ENCODE measurements at regions of chr4 and their contacts with region 1.

Region 1: GRCh38 chr4:118278473-118279274 is 74.1 kb downstream of the PRSS12 start:
- DNase-seq: peak; percentile 96 to 99 (median 98)
- ATAC-seq: peak; percentile 97
- H3K4me3 ChIP-seq: peak overlapping the region; percentile 69 to 79
- H3K4me3 Mint-ChIP-seq: peak overlapping the region; percentile 94
- H3K27ac ChIP-seq: peak overlapping the region; percentile 95 to 96
- H3K27ac Mint-ChIP-seq: peak overlapping the region; percentile 99
- H3K4me1 ChIP-seq: peaks cover 29% of the 10 kb centered on the region
- H3K4me1 Mint-ChIP-seq: peaks cover 59% of the 10 kb centered on the region
- H3K27me3 ChIP-seq: no peaks in the 10 kb centered on the region
- H3K27me3 Mint-ChIP-seq: no peaks in the 10 kb centered on the region
- CTCF ChIP-seq: no peak

Region 2: GRCh38 chr4:118237531-118237930 is 41.1 kb before region 1 on chr4:
- CTCF ChIA-PET with region 1: no interaction called
- POLR2A ChIA-PET with region 1: no interaction called
- intact Hi-C with region 1: no loop called
- DNase-seq: no peak
- ATAC-seq: no peak
- H3K4me3 ChIP-seq: no peak overlapping the region
- H3K4me3 Mint-ChIP-seq: no peak overlapping the region
- H3K27ac ChIP-seq: no peak overlapping the region
- H3K27ac Mint-ChIP-seq: no peak overlapping the region
- H3K4me1 ChIP-seq: no peaks in the 10 kb centered on the region
- H3K4me1 Mint-ChIP-seq: no peaks in the 10 kb centered on the region
- H3K27me3 ChIP-seq: no peaks in the 10 kb centered on the region
- H3K27me3 Mint-ChIP-seq: peaks cover 2% of the 10 kb centered on the region
- CTCF ChIP-seq: no peak

Region 3: DNA sequence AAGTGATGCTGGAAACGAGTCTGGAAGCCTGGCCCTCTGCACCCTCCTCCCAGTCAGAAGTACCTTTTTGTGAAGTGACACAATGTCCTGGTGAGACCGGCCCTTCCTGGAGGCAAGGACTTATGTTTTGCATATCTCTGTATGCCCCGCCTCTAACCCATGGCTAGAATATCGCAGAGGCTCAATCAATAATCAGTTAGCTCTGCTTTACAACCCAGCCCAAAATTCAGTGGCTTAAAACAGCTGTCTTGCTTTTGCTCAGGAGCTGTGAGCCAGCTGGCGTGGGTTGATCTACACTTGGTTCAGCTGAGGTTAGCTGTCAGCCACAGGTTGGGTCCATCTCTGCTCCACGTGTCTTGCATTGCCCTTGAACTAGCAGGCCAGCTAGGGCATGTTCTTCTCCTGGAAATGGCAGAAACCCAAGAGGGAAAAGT is 307.7 kb after region 1 on chr4:
- CTCF ChIA-PET with region 1: no interaction called
- POLR2A ChIA-PET with region 1: no interaction called
- intact Hi-C with region 1: loop called (anchors 1 to 5 kb)
- DNase-seq: no peak
- ATAC-seq: no peak
- H3K4me3 ChIP-seq: no peak overlapping the region
- H3K4me3 Mint-ChIP-seq: no peak overlapping the region
- H3K27ac ChIP-seq: no peak overlapping the region
- H3K27ac Mint-ChIP-seq: no peak overlapping the region
- H3K4me1 ChIP-seq: peaks cover 7% of the 10 kb centered on the region
- H3K4me1 Mint-ChIP-seq: peaks cover 9% of the 10 kb centered on the region
- H3K27me3 ChIP-seq: peaks cover 0 to 4% of the 10 kb centered on the region in 2 experiments
- H3K27me3 Mint-ChIP-seq: peaks cover 24% of the 10 kb centered on the region
- CTCF ChIP-seq: no peak

Region 4: GRCh38 chr4:118835571-118836300 is 557.1 kb after region 1 on chr4 and contains the start of gene SEC24D:
- CTCF ChIA-PET with region 1: no interaction called
- POLR2A ChIA-PET with region 1: no interaction called
- intact Hi-C with region 1: loop called (anchors 2 to 5 kb)
- DNase-seq: peak; percentile 67 to 90 (median 79)
- ATAC-seq: peak; percentile 81
- H3K4me3 ChIP-seq: peak within 1 kb of the TSS; percentile 76 to 80
- H3K4me3 Mint-ChIP-seq: peak within 1 kb of the TSS; percentile 100
- H3K27ac ChIP-seq: peak within 1 kb of the TSS; percentile 69 to 87
- H3K27ac Mint-ChIP-seq: peak within 1 kb of the TSS; percentile 97
- H3K4me1 ChIP-seq: peaks cover 6% of the 10 kb centered on the region
- H3K4me1 Mint-ChIP-seq: peaks cover 26% of the 10 kb centered on the region
- H3K27me3 ChIP-seq: no peaks in the 10 kb centered on the region
- H3K27me3 Mint-ChIP-seq: no peaks in the 10 kb centered on the region
- CTCF ChIP-seq: no peak
- total RNA-seq, gene SEC24D: 16.7 to 17.2 TPM

Region 5: DNA sequence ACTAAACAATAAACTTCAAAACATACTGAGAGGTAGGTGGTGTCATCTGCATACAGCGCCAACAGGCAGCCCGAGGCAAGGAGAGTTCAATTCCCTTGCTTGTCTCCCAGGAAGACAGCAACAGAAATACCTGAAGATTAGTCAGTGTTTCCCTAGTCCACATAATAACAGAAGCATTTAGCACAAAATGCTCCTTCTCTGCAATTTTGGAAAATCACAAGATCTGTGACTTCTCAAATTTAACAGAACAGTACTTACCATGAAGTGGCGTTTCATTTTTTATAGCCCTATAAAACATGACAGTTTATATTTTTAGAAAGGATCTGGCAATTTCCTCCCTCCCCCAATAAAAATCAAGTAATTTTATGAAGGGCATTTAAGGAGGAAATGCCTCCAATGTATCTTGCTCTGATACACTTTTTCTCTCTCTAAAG is 789.9 kb after region 1 on chr4:
- CTCF ChIA-PET with region 1: no interaction called
- POLR2A ChIA-PET with region 1: no interaction called
- intact Hi-C with region 1: no loop called
- DNase-seq: no peak
- ATAC-seq: no peak
- H3K4me3 ChIP-seq: no peak overlapping the region
- H3K4me3 Mint-ChIP-seq: no peak overlapping the region
- H3K27ac ChIP-seq: no peak overlapping the region
- H3K27ac Mint-ChIP-seq: no peak overlapping the region
- H3K4me1 ChIP-seq: no peaks in the 10 kb centered on the region
- H3K4me1 Mint-ChIP-seq: peaks cover 2% of the 10 kb centered on the region
- H3K27me3 ChIP-seq: no peaks in the 10 kb centered on the region
- H3K27me3 Mint-ChIP-seq: peaks cover 14% of the 10 kb centered on the region
- CTCF ChIP-seq: no peak

Region 6: GRCh38 chr4:119212234-119212963 is 933.7 kb after region 1 on chr4 and contains the start of gene USP53:
- CTCF ChIA-PET with region 1: no interaction called
- POLR2A ChIA-PET with region 1: no interaction called
- intact Hi-C with region 1: loop called (anchors 2 to 10 kb)
- DNase-seq: peak; percentile 94 to 99 (median 98)
- ATAC-seq: peak; percentile 94
- H3K4me3 ChIP-seq: peak within 1 kb of the TSS; percentile 74 to 89
- H3K4me3 Mint-ChIP-seq: peak within 1 kb of the TSS; percentile 91
- H3K27ac ChIP-seq: peak within 1 kb of the TSS; percentile 70 to 73
- H3K27ac Mint-ChIP-seq: peak within 1 kb of the TSS; percentile 95
- H3K4me1 ChIP-seq: peaks cover 8% of the 10 kb centered on the region
- H3K4me1 Mint-ChIP-seq: peaks cover 56% of the 10 kb centered on the region
- H3K27me3 ChIP-seq: no peaks in the 10 kb centered on the region
- H3K27me3 Mint-ChIP-seq: no peaks in the 10 kb centered on the region
- CTCF ChIP-seq: no peak
- total RNA-seq, gene USP53: 24.7 to 27.8 TPM

Region 7: DNA sequence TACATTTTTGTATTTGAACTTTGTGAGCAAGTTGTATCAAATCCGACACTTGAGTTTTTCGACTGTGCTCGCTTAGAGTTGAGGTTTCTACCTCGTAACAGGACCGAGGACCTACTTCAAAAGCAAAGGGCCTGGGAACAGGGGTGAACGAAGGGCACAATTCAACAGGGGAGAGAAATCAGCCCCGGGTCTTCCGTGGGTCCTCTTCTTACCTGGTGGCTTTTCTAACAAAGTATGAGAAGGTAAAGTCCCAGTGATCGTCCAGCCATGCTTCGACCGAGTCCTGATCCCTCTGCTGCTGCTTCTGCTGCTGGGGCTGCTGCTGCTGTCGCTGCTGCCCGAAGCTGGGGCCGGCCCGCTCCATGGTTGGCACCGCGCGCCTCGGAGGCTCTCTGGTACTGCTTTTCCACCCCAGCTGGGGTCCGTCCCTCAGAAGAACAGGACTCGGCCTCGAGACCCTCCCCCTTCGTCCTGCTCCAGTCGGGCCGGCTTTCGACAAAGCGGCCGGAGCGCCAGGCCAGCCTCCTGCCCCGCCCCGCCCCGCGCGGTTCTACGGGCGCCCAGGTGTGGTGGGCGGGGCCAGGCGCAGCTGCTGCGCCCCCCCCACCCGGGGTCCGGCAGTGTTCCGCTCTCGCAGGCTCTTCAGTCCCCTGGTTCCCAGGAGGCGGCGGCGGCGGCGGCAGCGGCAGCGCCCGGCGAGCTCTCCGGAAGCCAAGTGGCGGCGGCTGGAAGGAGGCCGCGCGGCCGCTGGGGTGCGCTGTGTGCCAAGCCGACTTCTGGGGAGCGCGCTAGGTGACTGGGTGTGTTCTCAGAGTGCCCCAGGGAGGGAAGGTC is 1349.9 kb after region 1 on chr4 and contains the start of gene PDE5A:
- CTCF ChIA-PET with region 1: no interaction called
- POLR2A ChIA-PET with region 1: no interaction called
- intact Hi-C with region 1: loop called in 1 of 2 experiments (anchors 5 kb)
- DNase-seq: peak; percentile 52 to 85 (median 76)
- ATAC-seq: peak; percentile 76
- H3K4me3 ChIP-seq: peak within 1 kb of the TSS; percentile 73 to 78
- H3K4me3 Mint-ChIP-seq: peak within 1 kb of the TSS; percentile 88
- H3K27ac ChIP-seq: peak within 1 kb of the TSS in 1 of 2 experiments; percentile 50
- H3K27ac Mint-ChIP-seq: peak within 1 kb of the TSS; percentile 71
- H3K4me1 ChIP-seq: peaks cover 9% of the 10 kb centered on the region
- H3K4me1 Mint-ChIP-seq: peaks cover 23% of the 10 kb centered on the region
- H3K27me3 ChIP-seq: no peaks in the 10 kb centered on the region
- H3K27me3 Mint-ChIP-seq: peaks cover 7% of the 10 kb centered on the region
- CTCF ChIP-seq: peak; percentile 74
- total RNA-seq, gene PDE5A: 0.11 to 0.25 TPM